Activated B cell treated with CpG ODN at 0.5 μM for 24 hours (primary cell): ENCODE measurements at regions of chr14 and their contacts with region 1.

Region 1: DNA sequence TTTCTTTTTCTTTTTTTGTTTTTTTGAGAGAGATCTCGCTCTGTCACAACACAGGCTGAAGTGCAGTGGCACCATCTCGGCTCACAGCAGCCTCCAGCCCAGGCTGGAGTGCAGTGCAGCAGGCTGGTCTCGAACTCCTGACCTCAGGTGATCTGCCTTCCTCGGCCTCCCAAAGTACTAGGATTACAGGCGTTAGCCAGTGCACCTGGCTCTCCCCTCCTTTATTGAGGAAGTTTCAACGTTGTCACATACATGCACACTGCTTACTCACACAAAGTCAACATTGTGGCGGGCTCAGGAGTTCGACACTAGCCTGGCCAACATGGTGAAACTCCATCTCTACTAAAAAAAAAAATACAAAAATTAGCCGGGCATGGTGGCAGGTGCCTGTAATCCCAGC is 32.0 kb downstream of the EAPP start:
- DNase-seq: no peak
- ATAC-seq: no peak
- H3K4me3 Mint-ChIP-seq: no peak overlapping the region
- H3K27ac Mint-ChIP-seq: no peak overlapping the region
- H3K4me1 Mint-ChIP-seq: no peaks in the 10 kb centered on the region
- H3K27me3 Mint-ChIP-seq: no peaks in the 10 kb centered on the region
- CTCF ChIP-seq: no peak

Region 2: DNA sequence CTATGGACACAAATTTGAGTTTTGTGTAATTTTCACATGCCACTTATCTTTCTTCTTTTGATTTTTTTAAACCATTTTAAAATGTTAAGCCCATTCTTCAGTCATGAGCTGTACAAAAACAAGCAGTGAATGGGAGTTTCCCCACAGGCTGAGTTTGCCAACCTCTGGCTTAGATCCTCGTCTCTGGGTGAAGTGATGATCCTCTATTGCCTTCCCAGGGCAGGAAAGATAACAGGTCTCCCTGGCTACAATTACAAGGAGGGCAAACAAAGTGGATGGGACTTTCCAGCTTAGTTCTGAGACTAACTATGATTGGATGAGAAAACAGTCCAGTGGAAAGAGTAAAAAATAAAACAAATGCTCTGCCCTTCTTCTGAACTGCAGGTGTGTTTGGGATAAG is 249.1 kb before region 1 on chr14:
- CTCF ChIA-PET with region 1: no interaction called
- POLR2A ChIA-PET with region 1: no interaction called
- intact Hi-C with region 1: no loop called
- DNase-seq: no peak
- ATAC-seq: no peak
- H3K4me3 Mint-ChIP-seq: no peak overlapping the region
- H3K27ac Mint-ChIP-seq: no peak overlapping the region
- H3K4me1 Mint-ChIP-seq: no peaks in the 10 kb centered on the region
- H3K27me3 Mint-ChIP-seq: peaks cover 2% of the 10 kb centered on the region
- CTCF ChIP-seq: no peak

Region 3: DNA sequence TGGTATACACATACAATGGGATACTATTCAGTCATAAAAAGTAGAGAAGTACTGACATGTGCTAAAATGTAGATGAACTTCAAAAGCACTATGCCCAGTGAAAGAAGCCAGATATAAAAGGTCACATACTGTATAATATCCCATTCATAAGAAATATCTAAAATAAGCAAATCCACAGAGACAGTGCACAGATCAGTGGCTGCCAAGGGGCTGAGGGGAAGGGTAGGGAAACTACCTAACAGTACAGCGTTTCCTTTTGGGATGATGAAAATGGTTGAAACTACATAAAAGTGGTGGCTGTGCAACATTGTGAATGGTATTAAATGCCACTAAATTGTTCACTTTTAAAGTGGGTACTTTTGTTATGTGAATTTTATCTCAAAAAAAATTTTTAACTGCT is 20.1 kb after region 1 on chr14:
- CTCF ChIA-PET with region 1: no interaction called
- POLR2A ChIA-PET with region 1: interaction called, 11 read pairs
- intact Hi-C with region 1: no loop called
- DNase-seq: no peak
- ATAC-seq: peak; percentile 37
- H3K4me3 Mint-ChIP-seq: no peak overlapping the region
- H3K27ac Mint-ChIP-seq: no peak overlapping the region
- H3K4me1 Mint-ChIP-seq: no peaks in the 10 kb centered on the region
- H3K27me3 Mint-ChIP-seq: no peaks in the 10 kb centered on the region
- CTCF ChIP-seq: no peak